ENCODE measurements at regions of chr11 and their contacts with region 1.

Region 1: GRCh38 chr11:95067039-95067840 is 521 bp downstream of the SRSF8 start:
- DNase-seq: peak; percentile 57
- ATAC-seq: peak; percentile 91
- H3K4me3 ChIP-seq: peak overlapping the region; percentile 80 to 97 (median 93)
- H3K27ac ChIP-seq: peak overlapping the region; percentile 93
- H3K4me1 ChIP-seq: peaks cover 18% of the 10 kb centered on the region
- H3K27me3 ChIP-seq: no peaks in the 10 kb centered on the region; a peak in 1 of 5 replicates
- CTCF ChIP-seq: peak; percentile 66
- EP300 ChIP-seq: no peak
- POLR2A ChIP-seq: peak; percentile 60 to 66
- RAD21 ChIP-seq: peak; percentile 24; the same call in 1 of the 2 replicates

Region 2: DNA sequence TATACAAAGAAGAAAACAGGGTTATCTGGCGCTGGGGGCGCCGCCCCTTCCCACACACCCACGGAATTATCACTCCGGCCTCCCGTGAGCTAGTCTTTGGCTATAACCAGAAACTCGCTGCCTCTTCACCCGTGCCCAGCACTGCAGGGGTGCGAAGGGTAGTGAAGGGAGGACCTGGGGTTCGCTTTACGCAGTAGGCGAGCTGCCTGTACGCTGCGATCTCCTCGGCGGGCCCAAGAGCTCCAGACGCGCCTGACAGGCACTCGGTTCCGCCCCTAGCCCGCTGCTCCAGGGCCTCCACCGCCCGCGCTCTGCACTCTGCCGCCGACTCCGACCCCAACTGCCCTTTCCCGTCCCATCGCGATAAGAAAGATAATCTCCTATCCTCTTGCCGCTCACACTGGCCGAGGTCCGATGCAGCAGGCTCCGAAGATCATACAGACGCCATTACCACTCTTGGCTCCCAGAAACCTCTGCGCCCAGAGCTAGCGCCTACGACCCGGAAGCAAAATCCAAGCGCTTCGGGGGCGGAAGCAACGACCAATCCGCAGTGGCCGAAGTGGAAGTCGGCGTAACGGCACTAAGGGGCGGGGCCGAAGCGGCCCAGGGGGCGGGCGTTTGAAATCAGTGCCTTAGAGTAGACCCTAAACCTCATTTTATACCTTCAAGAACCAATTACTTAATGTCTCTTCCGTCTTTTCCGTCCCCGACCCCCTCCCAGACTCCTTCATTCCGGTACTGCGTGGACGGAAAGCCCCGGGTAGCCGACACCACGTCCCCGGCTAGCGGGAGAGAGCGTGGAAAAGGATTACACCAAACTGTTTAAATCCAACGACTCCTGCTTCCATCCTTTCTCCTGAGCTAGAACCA is 93.9 kb before region 1 on chr11 and contains the starts of genes CWC15 and KDM4D:
- CTCF ChIA-PET with region 1: no interaction called
- POLR2A ChIA-PET with region 1: interaction called, 42 read pairs
- in situ Hi-C with region 1: no loop called
- intact Hi-C with region 1: loop called (anchors 1 kb)
- DNase-seq: peak; percentile 87
- ATAC-seq: peak; percentile 100
- H3K4me3 ChIP-seq: peak within 1 kb of the TSS; percentile 93 to 99 (median 97)
- H3K27ac ChIP-seq: peak within 1 kb of the TSS; percentile 81
- H3K4me1 ChIP-seq: peaks cover 25% of the 10 kb centered on the region
- H3K27me3 ChIP-seq: no peaks in the 10 kb centered on the region; a peak in 1 of 5 replicates
- CTCF ChIP-seq: no peak
- EP300 ChIP-seq: 0 out of 4 replicates have a peak, but pooled peaks of 1 of the 2 experiments have one; percentile 20
- POLR2A ChIP-seq: peak; percentile 81 to 87
- RAD21 ChIP-seq: 0 out of 2 replicates have a peak, but pooled peaks have one; percentile 14
- total RNA-seq, gene CWC15: 61.2 and 73.7 TPM in 2 replicates
- total RNA-seq, gene KDM4D: 1.3 and 2.0 TPM in 2 replicates

Region 3: GRCh38 chr11:95119374-95120060 is 52.3 kb after region 1 on chr11:
- CTCF ChIA-PET with region 1: no interaction called
- POLR2A ChIA-PET with region 1: no interaction called
- in situ Hi-C with region 1: no loop called
- intact Hi-C with region 1: no loop called
- DNase-seq: peak; percentile 10
- ATAC-seq: no peak
- H3K4me3 ChIP-seq: no peak overlapping the region
- H3K27ac ChIP-seq: no peak overlapping the region
- H3K4me1 ChIP-seq: no peaks in the 10 kb centered on the region
- H3K27me3 ChIP-seq: no peaks in the 10 kb centered on the region
- CTCF ChIP-seq: no peak
- EP300 ChIP-seq: no peak
- POLR2A ChIP-seq: no peak
- RAD21 ChIP-seq: no peak

Region 4: GRCh38 chr11:95138448-95138847 is 71.2 kb after region 1 on chr11:
- CTCF ChIA-PET with region 1: no interaction called
- POLR2A ChIA-PET with region 1: no interaction called
- in situ Hi-C with region 1: loop called (anchors 5 kb)
- intact Hi-C with region 1: loop called (anchors 2 kb)
- DNase-seq: no peak
- ATAC-seq: peak; percentile 90
- H3K4me3 ChIP-seq: no peak overlapping the region
- H3K27ac ChIP-seq: no peak overlapping the region
- H3K4me1 ChIP-seq: no peaks in the 10 kb centered on the region
- H3K27me3 ChIP-seq: peaks cover 0 to 4% of the 10 kb centered on the region in 2 experiments; a peak in 2 of 5 replicates
- CTCF ChIP-seq: peak; percentile 37
- EP300 ChIP-seq: no peak
- POLR2A ChIP-seq: no peak
- RAD21 ChIP-seq: no peak

Region 5: GRCh38 chr11:95163106-95163505 is 95.9 kb after region 1 on chr11:
- CTCF ChIA-PET with region 1: no interaction called
- POLR2A ChIA-PET with region 1: no interaction called
- in situ Hi-C with region 1: no loop called
- intact Hi-C with region 1: no loop called
- DNase-seq: no peak
- ATAC-seq: no peak
- H3K4me3 ChIP-seq: no peak overlapping the region
- H3K27ac ChIP-seq: no peak overlapping the region
- H3K4me1 ChIP-seq: no peaks in the 10 kb centered on the region
- H3K27me3 ChIP-seq: no peaks in the 10 kb centered on the region
- CTCF ChIP-seq: no peak
- EP300 ChIP-seq: no peak
- POLR2A ChIP-seq: no peak
- RAD21 ChIP-seq: no peak

Region 6: DNA sequence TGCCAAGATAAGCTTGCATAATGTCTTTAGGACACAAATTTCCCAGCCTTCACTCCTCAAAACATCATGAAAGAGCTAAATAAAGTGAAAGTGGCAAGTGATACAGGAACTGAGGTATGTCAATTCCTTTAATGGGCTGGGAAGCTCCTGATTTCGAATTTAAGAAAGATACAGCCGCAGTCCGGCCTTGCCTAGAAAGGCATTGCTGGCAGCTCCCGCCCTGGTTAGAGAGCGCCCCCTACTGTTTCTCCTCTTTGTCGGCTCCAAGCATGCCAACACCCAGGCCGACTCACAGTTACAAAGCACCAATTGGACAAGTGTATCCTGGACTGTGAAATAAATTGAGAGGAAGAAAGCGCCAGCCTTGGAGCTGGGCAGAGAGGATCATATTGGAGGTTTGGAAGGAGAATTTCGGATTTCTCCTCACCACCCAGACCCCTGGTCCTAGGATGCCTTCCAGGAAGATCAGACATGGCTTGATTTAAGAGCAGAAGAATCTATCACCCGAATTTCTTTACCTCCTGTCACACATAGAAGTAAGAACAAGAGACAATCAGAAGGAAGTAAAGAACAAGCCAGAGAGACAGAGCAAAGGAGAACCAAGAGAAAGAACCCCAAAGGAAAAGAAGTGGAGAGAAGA is 638.4 kb after region 1 on chr11:
- CTCF ChIA-PET with region 1: interaction called, 6 read pairs
- POLR2A ChIA-PET with region 1: no interaction called
- in situ Hi-C with region 1: loop called (anchors 10 kb)
- intact Hi-C with region 1: loop called (anchors 1 kb)
- DNase-seq: peak; percentile 55
- ATAC-seq: peak; percentile 99
- H3K4me3 ChIP-seq: no peak overlapping the region
- H3K27ac ChIP-seq: no peak overlapping the region
- H3K4me1 ChIP-seq: no peaks in the 10 kb centered on the region
- H3K27me3 ChIP-seq: peaks cover 3 to 11% of the 10 kb centered on the region in 2 experiments; a peak in 3 of 5 replicates
- CTCF ChIP-seq: peak; percentile 89
- EP300 ChIP-seq: no peak
- POLR2A ChIP-seq: no peak
- RAD21 ChIP-seq: peak; percentile 81

Region 7: DNA sequence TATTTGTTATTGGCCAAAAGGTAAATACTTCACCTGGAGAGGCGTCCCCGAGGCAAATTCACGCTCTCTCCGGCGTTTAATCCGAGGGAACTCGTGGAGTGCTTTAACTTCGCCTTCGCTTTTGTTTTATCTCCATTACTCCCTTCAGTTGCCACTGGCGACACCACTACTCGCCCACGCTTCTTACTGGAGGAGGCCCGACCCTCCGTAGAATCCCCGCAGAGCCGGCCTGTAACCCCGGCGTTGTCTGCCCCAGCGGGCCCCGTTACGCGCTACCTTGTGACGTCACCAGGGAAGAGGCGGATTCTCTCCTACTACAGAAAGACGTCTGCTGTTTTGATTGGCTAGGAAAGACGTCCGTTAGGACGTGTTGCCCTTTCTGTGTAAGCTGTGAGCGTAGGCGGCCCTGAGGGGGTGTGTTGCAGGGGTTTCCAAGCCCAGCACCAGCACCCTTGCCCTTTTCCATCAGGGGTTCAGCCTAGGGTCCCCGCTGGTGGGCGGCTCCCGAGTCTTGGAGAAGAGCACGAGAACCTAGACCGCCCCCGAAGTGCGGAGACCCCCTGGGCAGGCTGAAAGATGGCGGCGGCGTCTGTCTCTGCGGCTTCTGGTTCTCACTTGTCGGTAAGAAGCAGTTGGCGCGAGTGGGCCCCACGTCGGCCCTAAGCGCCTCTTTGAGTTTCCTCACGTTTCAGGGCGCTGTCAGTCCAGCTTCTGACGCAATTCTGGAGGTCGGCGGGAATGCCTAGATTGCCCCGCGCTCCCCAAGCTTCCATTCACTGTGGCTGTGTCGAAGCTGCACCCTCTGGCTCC is 723.1 kb after region 1 on chr11 and contains the start of gene CEP57:
- CTCF ChIA-PET with region 1: no interaction called
- POLR2A ChIA-PET with region 1: interaction called, 35 read pairs
- in situ Hi-C with region 1: no loop called
- intact Hi-C with region 1: loop called (anchors 1 kb)
- DNase-seq: peak; percentile 98
- ATAC-seq: peak; percentile 84
- H3K4me3 ChIP-seq: peak within 1 kb of the TSS; percentile 87 to 98 (median 97)
- H3K27ac ChIP-seq: peak within 1 kb of the TSS; percentile 98
- H3K4me1 ChIP-seq: peaks cover 54% of the 10 kb centered on the region
- H3K27me3 ChIP-seq: no peaks in the 10 kb centered on the region; a peak in 1 of 5 replicates
- CTCF ChIP-seq: no peak
- EP300 ChIP-seq: no peak; a peak in 1 of 4 replicates
- POLR2A ChIP-seq: peak; percentile 8 to 61; a peak in 3 of 4 replicates
- RAD21 ChIP-seq: peak; percentile 5; the same call in 1 of the 2 replicates
- total RNA-seq, gene CEP57: 59.4 and 85.6 TPM in 2 replicates